Endothelial cell of umbilical vein (primary cell): ENCODE measurements at regions of chr12 and their contacts with region 1.

Region 1: DNA sequence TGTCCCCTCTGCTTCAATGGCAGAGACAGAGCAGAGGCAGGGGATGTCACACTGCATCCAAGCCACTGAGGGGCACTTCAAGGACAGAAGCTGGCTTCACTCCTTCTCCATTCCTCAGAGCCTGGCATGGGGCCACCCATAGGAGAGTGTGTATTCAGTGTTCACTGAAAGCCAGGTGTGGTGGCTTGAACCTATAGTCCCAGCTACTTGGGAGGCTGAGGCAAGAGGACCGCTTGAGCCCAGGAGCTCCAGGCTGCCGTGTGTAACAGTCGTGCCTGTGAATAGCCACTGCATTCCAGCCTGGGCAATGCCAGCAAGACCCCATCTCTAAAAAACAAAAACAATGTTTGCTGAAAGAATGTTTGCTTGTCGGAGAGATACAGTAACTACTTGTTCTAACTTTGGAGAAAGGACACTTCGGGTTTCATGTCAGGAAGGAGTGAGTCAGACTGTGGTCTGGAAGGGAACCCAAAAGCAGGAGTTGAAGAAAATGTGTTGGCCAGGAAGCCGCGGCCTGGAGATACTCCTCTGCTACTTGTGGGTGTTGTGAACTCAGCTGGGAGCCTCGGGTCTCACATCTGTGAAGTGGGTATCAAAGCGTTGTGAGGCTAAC is 43.4 kb downstream of the ELK3 start:
- DNase-seq: peak; percentile 96
- H3K4me3 ChIP-seq: no peak overlapping the region
- H3K27ac ChIP-seq: peak overlapping the region; percentile 86
- H3K4me1 ChIP-seq: peaks cover 94% of the 10 kb centered on the region
- H3K27me3 ChIP-seq: no peaks in the 10 kb centered on the region
- CTCF ChIP-seq: no peak
- POLR2A ChIP-seq: no peak

Region 2: GRCh38 chr12:96219698-96220206 is 17.8 kb before region 1 on chr12:
- CTCF ChIA-PET with region 1: interaction called, 7 read pairs
- POLR2A ChIA-PET with region 1: no interaction called
- dilution Hi-C with region 1: no loop called
- intact Hi-C with region 1: loop called (anchors 2 kb)
- DNase-seq: peak; percentile 96
- H3K4me3 ChIP-seq: no peak overlapping the region
- H3K27ac ChIP-seq: peak overlapping the region; percentile 90
- H3K4me1 ChIP-seq: peaks cover 93% of the 10 kb centered on the region
- H3K27me3 ChIP-seq: no peaks in the 10 kb centered on the region
- CTCF ChIP-seq: no peak
- POLR2A ChIP-seq: peak; percentile 63

Region 3: DNA sequence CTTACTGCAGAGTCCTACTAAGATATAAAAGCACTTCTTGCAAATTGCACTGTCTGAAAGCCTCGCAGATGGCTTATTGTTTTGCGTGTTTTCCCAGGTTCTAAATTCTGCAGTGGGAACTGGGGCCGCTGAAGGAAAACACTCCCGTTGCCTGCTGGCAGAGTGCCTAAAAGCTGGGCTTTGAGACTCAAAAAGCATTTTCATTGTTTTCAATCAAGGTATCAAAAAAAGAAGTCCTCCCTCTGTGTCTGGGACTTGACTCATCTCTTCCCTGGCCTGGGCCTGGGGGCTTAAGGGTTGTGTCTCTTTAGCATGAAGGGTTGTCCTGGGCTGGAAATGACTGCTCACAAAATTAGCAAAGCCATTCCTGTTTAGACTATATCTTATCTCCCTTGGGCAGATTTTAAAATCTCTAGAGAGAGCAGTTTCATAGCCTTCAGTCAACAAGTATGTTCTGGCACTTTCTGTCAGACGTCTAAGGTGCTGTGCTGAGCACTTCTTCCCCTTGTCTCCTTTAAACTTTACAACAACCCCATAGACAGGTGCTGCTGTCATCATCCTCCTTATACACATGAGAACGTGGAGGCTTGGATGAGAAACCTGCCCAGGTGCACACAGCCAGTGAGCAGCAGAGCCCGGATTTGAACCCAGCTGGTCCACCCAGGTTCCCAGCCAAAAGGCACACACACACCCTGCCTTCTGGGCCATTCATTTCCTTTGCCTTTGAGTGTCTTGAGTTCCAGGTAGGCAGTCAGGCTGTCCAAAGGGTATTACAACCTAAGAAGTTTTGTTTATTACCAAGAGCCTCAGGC is 12.3 kb before region 1 on chr12:
- CTCF ChIA-PET with region 1: interaction called, 4 read pairs
- POLR2A ChIA-PET with region 1: no interaction called
- dilution Hi-C with region 1: no loop called
- intact Hi-C with region 1: loop called (anchors 1 kb)
- DNase-seq: peak; percentile 93
- H3K4me3 ChIP-seq: no peak overlapping the region
- H3K27ac ChIP-seq: peak overlapping the region; percentile 60
- H3K4me1 ChIP-seq: peaks cover 54% of the 10 kb centered on the region
- H3K27me3 ChIP-seq: no peaks in the 10 kb centered on the region
- CTCF ChIP-seq: no peak
- POLR2A ChIP-seq: no peak

Region 4: GRCh38 chr12:96258104-96258961 is 20.8 kb after region 1 on chr12:
- CTCF ChIA-PET with region 1: interaction called, 8 read pairs
- POLR2A ChIA-PET with region 1: interaction called, 4 read pairs
- dilution Hi-C with region 1: no loop called
- intact Hi-C with region 1: loop called (anchors 1 kb)
- DNase-seq: peak; percentile 70
- H3K4me3 ChIP-seq: no peak overlapping the region
- H3K27ac ChIP-seq: peak overlapping the region; percentile 41
- H3K4me1 ChIP-seq: peaks cover 80% of the 10 kb centered on the region
- H3K27me3 ChIP-seq: no peaks in the 10 kb centered on the region
- CTCF ChIP-seq: no peak
- POLR2A ChIP-seq: no peak